Left ventricle myocardium inferior (tissue), 1 donor: ENCODE measurements at regions of chr18 and their contacts with region 1.

Region 1: DNA sequence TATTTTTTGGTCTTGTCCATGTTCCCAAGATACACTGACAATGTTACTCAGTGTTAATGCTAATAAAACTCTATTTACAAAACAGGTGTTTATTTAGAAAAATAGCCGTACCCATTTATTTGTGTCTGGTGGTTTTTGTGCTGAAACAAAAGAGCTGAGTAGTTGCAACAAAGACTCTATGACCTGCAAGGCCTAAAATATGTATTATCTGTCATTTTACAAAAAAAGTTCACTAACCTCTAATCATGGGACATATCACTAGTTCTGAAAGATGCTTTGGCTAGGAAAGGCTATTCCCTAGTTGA is 59.2 kb upstream of the SLC25A52 start:
- DNase-seq: no peak
- H3K4me3 ChIP-seq: no peak overlapping the region
- H3K27ac ChIP-seq: no peak overlapping the region
- H3K4me1 ChIP-seq: peaks cover 8% of the 10 kb centered on the region
- H3K27me3 ChIP-seq: no peaks in the 10 kb centered on the region
- CTCF ChIP-seq: no peak

Region 2: DNA sequence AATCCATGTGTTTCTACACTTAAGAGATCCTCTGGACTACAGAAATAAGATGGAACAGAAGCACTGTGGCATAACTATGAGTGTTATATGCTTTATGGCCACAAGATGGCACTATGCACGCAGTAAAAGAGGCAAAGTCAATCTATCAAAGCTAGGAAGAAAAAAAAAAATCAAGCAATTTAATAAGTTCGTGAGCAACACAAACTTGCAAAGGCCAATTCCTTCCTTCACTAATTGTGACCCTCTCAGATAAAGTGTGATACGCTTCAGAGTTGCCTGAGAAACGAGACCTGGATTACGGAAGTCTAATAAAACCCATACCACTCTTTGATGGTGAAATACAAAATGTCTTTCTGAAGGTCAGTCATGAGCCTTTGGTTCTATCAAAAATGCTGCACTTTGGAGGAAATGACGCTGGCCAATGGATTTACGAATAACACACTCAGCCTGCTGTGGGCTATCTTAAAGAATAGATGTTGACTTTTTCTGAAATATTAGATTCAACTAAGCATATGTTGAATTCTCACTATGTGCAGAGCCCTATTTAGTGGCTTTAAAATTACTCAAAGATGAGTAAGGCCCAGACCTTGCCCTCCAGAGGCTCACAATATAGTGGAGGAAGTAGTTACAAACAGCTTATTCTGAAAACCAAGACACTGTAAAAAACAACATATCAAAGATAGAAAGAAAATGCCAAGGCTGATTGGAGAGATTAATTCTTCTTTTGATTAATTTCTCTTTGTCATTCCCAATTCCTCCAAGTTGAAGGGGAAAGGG is 263.7 kb before region 1 on chr18:
- intact Hi-C with region 1: loop called (anchors 10 kb)
- DNase-seq: no peak
- H3K4me3 ChIP-seq: no peak overlapping the region
- H3K27ac ChIP-seq: no peak overlapping the region
- H3K4me1 ChIP-seq: no peaks in the 10 kb centered on the region
- H3K27me3 ChIP-seq: peaks cover 12% of the 10 kb centered on the region
- CTCF ChIP-seq: peak; percentile 86

Region 3: GRCh38 chr18:31722369-31722957 is 97.4 kb before region 1 on chr18:
- intact Hi-C with region 1: no loop called
- DNase-seq: peak; percentile 65
- H3K4me3 ChIP-seq: no peak overlapping the region
- H3K27ac ChIP-seq: no peak overlapping the region
- H3K4me1 ChIP-seq: peaks cover 43% of the 10 kb centered on the region
- H3K27me3 ChIP-seq: no peaks in the 10 kb centered on the region
- CTCF ChIP-seq: peak; percentile 91

Region 4: GRCh38 chr18:33161131-33161530 is 1341.3 kb after region 1 on chr18:
- intact Hi-C with region 1: no loop called
- DNase-seq: no peak
- H3K4me3 ChIP-seq: no peak overlapping the region
- H3K27ac ChIP-seq: no peak overlapping the region
- H3K4me1 ChIP-seq: no peaks in the 10 kb centered on the region
- H3K27me3 ChIP-seq: no peaks in the 10 kb centered on the region
- CTCF ChIP-seq: no peak